Ascending aorta (tissue), 2 donors: ENCODE measurements at regions of chr1 and their contacts with region 1.

Region 1: GRCh38 chr1:19651141-19651737 is 7.1 kb downstream of the NBL1 start:
- DNase-seq: peak in 1 of 2 donors; percentile 81
- H3K4me3 ChIP-seq: peak overlapping the region in 1 of 2 donors; percentile 25
- H3K27ac ChIP-seq: peak overlapping the region; percentile 43 to 83
- H3K4me1 ChIP-seq: peaks cover 21 to 43% of the 10 kb centered on the region in 2 donors
- H3K27me3 ChIP-seq: no peaks in the 10 kb centered on the region
- CTCF ChIP-seq: peak; percentile 60 to 79 (median 66)

Region 2: GRCh38 chr1:19251305-19252196 is 399.7 kb before region 1 on chr1 and contains the starts of genes EMC1 and MRTO4:
- intact Hi-C with region 1: loop called (anchors 5 kb)
- DNase-seq: peak; percentile 44 to 89
- H3K4me3 ChIP-seq: peak within 1 kb of the TSS; percentile 84 to 91
- H3K27ac ChIP-seq: peak within 1 kb of the TSS; percentile 85 to 94
- H3K4me1 ChIP-seq: peaks cover 9 to 29% of the 10 kb centered on the region in 2 donors
- H3K27me3 ChIP-seq: no peaks in the 10 kb centered on the region
- CTCF ChIP-seq: no peak
- total RNA-seq, gene EMC1: 93.0 TPM
- total RNA-seq, gene MRTO4: 13.4 TPM

Region 3: GRCh38 chr1:19311959-19312781 is 339.1 kb before region 1 on chr1 and contains the starts of genes AKR7A2 and SLC66A1:
- intact Hi-C with region 1: loop called (anchors 2 kb)
- DNase-seq: peak; percentile 78 to 96
- H3K4me3 ChIP-seq: peak within 1 kb of the TSS; percentile 71 to 96
- H3K27ac ChIP-seq: peak within 1 kb of the TSS; percentile 83 to 93
- H3K4me1 ChIP-seq: peaks cover 0 to 13% of the 10 kb centered on the region in 2 donors
- H3K27me3 ChIP-seq: no peaks in the 10 kb centered on the region
- CTCF ChIP-seq: no peak
- total RNA-seq, gene AKR7A2: 53.7 TPM
- total RNA-seq, gene SLC66A1: 11.1 TPM

Region 4: GRCh38 chr1:19341201-19342072 is 309.8 kb before region 1 on chr1:
- intact Hi-C with region 1: loop called (anchors 1 kb)
- DNase-seq: peak in 1 of 2 donors; percentile 87
- H3K4me3 ChIP-seq: no peak overlapping the region
- H3K27ac ChIP-seq: peak overlapping the region; percentile 32 to 55
- H3K4me1 ChIP-seq: peaks cover 4 to 8% of the 10 kb centered on the region in 2 donors
- H3K27me3 ChIP-seq: no peaks in the 10 kb centered on the region
- CTCF ChIP-seq: peak; percentile 76 to 92 (median 86)

Region 5: DNA sequence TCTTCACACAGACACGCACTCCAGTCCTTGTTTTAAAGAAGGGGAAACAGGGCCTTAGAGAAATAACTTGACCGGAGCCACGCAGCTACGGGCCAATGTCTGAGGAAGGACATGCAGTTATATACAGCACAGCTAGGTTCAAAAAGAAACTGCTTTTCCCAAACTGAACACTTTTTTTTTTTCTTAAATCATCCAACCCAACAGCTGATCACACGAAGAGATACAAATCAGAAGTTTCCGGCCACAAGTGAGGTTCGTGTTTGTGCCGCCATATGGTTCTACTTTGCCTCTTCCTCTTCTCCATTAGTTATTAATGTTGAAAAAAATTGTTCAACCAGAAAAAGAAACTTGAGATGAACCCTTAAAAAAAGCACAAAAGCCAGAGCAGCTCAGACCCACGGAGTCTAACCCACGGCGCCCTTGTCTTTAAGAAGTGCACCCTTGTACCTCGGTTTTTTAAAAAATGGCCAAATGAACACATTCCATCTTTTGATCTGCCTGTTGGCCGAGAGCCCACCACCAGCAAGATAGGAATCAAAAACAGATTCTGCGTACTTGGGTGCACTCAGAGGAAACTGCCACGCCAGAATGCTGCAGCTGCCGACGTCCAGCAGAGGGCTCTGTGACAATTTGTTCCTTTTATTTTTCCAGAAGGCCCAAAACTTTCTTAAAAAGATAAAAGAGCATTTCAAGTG is 260.2 kb before region 1 on chr1:
- intact Hi-C with region 1: loop called (anchors 1 kb)
- DNase-seq: peak in 1 of 2 donors; percentile 84
- H3K4me3 ChIP-seq: peak overlapping the region; percentile 28 to 54
- H3K27ac ChIP-seq: peak overlapping the region; percentile 77 to 81
- H3K4me1 ChIP-seq: peaks cover 15 to 72% of the 10 kb centered on the region in 2 donors
- H3K27me3 ChIP-seq: no peaks in the 10 kb centered on the region
- CTCF ChIP-seq: peak; percentile 72 to 89 (median 85)

Region 6: GRCh38 chr1:19563324-19564097 is 87.7 kb before region 1 on chr1:
- intact Hi-C with region 1: loop called (anchors 5 kb)
- DNase-seq: peak in 1 of 2 donors; percentile 76
- H3K4me3 ChIP-seq: peak overlapping the region; percentile 39 to 50
- H3K27ac ChIP-seq: peak overlapping the region; percentile 82
- H3K4me1 ChIP-seq: peaks cover 2 to 15% of the 10 kb centered on the region in 2 donors
- H3K27me3 ChIP-seq: no peaks in the 10 kb centered on the region
- CTCF ChIP-seq: no peak